ENCODE measurements at regions of chr1 and their contacts with region 1.

Region 1: GRCh38 chr1:166910396-166910994 is 34.4 kb upstream of the TADA1 start:
- DNase-seq: peak; percentile 84 to 93
- ATAC-seq: peak; percentile 97 to 100
- H3K4me3 ChIP-seq: no peak overlapping the region
- H3K27ac ChIP-seq: no peak overlapping the region
- H3K4me1 ChIP-seq: no peaks in the 10 kb centered on the region
- CTCF ChIP-seq: peak; percentile 86
- EP300 ChIP-seq: no peak
- POLR2A ChIP-seq: no peak
- RAD21 ChIP-seq: peak; percentile 86 to 90

Region 2: GRCh38 chr1:166884040-166884642 is 26.4 kb before region 1 on chr1:
- CTCF ChIA-PET with region 1: interaction called, 17 read pairs
- POLR2A ChIA-PET with region 1: no interaction called
- DNase-seq: peak; percentile 9 to 13
- ATAC-seq: peak; percentile 66 to 92; a peak in 4 of 6 replicates
- H3K4me3 ChIP-seq: no peak overlapping the region
- H3K27ac ChIP-seq: no peak overlapping the region
- H3K4me1 ChIP-seq: no peaks in the 10 kb centered on the region
- CTCF ChIP-seq: peak; percentile 18; the same call in 1 of the 3 replicates
- EP300 ChIP-seq: no peak
- POLR2A ChIP-seq: no peak
- RAD21 ChIP-seq: peak; percentile 27 to 37; a peak in 3 of 5 replicates

Region 3: DNA sequence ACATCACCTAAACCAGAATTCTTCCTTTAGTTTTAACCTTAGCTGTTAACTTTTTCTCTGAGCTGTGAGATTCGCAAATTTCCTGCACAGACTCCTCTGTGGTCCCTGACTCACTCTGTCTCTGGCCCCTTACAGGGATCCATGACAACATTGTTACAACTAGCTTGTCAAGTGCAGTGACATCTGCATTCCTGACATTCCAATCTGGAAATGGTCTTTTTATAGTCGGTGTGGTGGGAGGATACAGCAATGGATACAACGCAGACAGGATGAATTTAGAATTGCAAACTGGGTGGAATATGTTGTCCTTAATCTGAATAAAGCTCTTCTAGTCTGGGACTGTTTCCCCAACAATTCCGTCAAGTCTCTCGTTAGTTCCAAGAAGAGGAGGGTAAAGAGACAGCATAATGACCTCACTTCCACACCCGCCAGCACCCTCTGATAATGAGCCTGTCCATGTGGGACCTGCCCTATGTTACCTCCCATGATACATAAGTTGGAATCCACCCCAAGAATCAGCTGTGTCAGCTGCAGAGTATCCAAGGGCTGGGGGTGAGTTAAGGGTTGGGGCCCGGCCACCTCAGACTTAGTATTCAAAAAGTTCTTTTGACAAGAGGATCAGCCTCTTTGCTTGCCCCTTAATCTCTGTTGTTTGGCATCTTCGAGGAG is 15.4 kb after region 1 on chr1:
- CTCF ChIA-PET with region 1: interaction called, 23 read pairs
- POLR2A ChIA-PET with region 1: no interaction called
- DNase-seq: no peak
- ATAC-seq: no peak
- H3K4me3 ChIP-seq: no peak overlapping the region
- H3K27ac ChIP-seq: no peak overlapping the region
- H3K4me1 ChIP-seq: no peaks in the 10 kb centered on the region
- CTCF ChIP-seq: no peak
- EP300 ChIP-seq: no peak
- POLR2A ChIP-seq: no peak
- RAD21 ChIP-seq: no peak

Region 4: GRCh38 chr1:167043752-167044488 is 133.4 kb after region 1 on chr1:
- CTCF ChIA-PET with region 1: interaction called, 14 read pairs
- POLR2A ChIA-PET with region 1: no interaction called
- DNase-seq: peak; percentile 40 to 42
- ATAC-seq: peak; percentile 96 to 97
- H3K4me3 ChIP-seq: peak overlapping the region; percentile 36
- H3K27ac ChIP-seq: peak overlapping the region in 1 of 2 experiments; percentile 29; a peak in 2 of 6 replicates
- H3K4me1 ChIP-seq: no peaks in the 10 kb centered on the region
- CTCF ChIP-seq: no peak
- EP300 ChIP-seq: no peak
- POLR2A ChIP-seq: no peak
- RAD21 ChIP-seq: no peak

Region 5: GRCh38 chr1:167121375-167122120 is 211.1 kb after region 1 on chr1:
- CTCF ChIA-PET with region 1: interaction called, 13 read pairs
- POLR2A ChIA-PET with region 1: no interaction called
- DNase-seq: peak; percentile 58
- ATAC-seq: peak; percentile 71 to 87
- H3K4me3 ChIP-seq: peak overlapping the region; percentile 53
- H3K27ac ChIP-seq: peak overlapping the region; percentile 60 to 85
- H3K4me1 ChIP-seq: no peaks in the 10 kb centered on the region; the same call in 2 of the 3 replicates
- CTCF ChIP-seq: no peak
- EP300 ChIP-seq: no peak
- POLR2A ChIP-seq: no peak
- RAD21 ChIP-seq: no peak

Measured in A549 (cell line).